ENCODE measurements at regions of chr3 and their contacts with region 1.

Region 1: DNA sequence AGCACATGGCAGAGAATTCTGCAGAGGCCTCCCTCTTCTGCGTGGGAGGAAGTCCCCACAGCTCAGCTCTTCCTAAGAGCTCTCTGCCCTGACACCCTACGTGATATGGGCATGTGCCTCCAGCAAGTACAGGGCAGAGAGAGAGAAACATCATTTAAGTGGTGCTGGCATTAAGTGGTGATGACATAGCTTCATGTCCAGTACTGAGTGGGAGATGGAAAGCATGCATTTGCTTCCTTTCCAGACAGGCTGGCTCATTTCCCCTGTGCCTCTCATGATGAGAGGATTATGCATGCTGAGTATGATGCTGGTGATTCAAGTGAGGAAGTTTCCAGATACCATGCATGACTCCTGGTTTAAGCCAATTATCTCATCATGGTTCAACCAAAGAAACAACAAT is 26.9 kb downstream of the BFSP2 start:
- DNase-seq: no peak
- ATAC-seq: no peak
- H3K4me3 ChIP-seq: no peak overlapping the region
- H3K27ac ChIP-seq: no peak overlapping the region
- H3K4me1 ChIP-seq: peaks cover 5% of the 10 kb centered on the region; the same call in 1 of the 2 replicates
- H3K27me3 ChIP-seq: peaks cover 0 to 4% of the 10 kb centered on the region in 2 experiments; a peak in 1 of 4 replicates
- CTCF ChIP-seq: no peak
- EP300 ChIP-seq: no peak
- POLR2A ChIP-seq: no peak
- RAD21 ChIP-seq: no peak

Region 2: GRCh38 chr3:132730891-132731580 is 695.7 kb before region 1 on chr3:
- CTCF ChIA-PET with region 1: interaction called, 19 read pairs
- POLR2A ChIA-PET with region 1: no interaction called
- RAD21 ChIA-PET with region 1: interaction called, 4 read pairs
- SMC1A ChIA-PET with region 1: interaction called, 7 read pairs
- in situ Hi-C with region 1: loop called (anchors 5 kb)
- intact Hi-C with region 1: loop called (anchors 1 kb)
- DNase-seq: no peak
- ATAC-seq: peak; percentile 70
- H3K4me3 ChIP-seq: no peak overlapping the region
- H3K27ac ChIP-seq: no peak overlapping the region
- H3K4me1 ChIP-seq: no peaks in the 10 kb centered on the region
- H3K27me3 ChIP-seq: no peaks in the 10 kb centered on the region; a peak in 2 of 4 replicates
- CTCF ChIP-seq: peak in 2 of 3 experiments; percentile 40 to 57; a peak in 3 of 6 replicates
- EP300 ChIP-seq: no peak
- POLR2A ChIP-seq: no peak
- RAD21 ChIP-seq: peak; percentile 77

Measured in GM12878 (cell line).